Activated CD4-positive, alpha-beta T cell treated with anti-CD3 and anti-CD28 coated beads for 36 hours (primary cell): ENCODE measurements at regions of chr10 and their contacts with region 1.

Region 1: DNA sequence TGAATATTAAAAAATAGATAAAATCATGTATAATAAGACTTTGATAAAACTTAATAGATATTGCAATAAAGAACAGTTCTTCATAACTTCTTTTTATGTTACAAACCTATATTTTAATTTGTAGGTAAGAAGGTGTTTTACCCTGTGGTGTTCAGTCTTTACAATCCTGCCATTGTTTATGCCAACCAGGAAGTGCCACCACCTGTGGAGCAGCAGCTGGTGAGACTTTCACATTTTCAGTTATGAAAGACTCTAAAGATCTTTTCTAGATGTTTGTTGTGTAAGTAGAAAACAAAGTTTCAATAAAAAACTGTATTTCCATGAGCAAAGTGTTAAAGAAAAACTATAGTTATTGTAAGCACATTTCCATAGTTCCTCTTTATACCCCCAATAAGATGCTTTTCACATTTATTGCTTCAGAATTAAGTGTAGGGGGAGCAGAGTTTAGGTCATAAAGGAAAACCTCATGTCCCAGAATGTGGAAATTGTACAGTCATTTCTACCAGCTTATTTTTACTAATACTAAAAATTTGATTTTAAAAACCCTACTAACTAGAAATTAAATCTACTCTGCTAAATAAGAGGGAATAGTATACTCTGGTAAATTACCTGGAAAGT is 28.7 kb downstream of the CSGALNACT2 start:
- DNase-seq: no peak
- ATAC-seq: peak; percentile 16
- H3K4me3 Mint-ChIP-seq: no peak overlapping the region
- H3K27ac Mint-ChIP-seq: no peak overlapping the region
- H3K4me1 Mint-ChIP-seq: peaks cover 29% of the 10 kb centered on the region
- H3K27me3 Mint-ChIP-seq: no peaks in the 10 kb centered on the region

Region 2: DNA sequence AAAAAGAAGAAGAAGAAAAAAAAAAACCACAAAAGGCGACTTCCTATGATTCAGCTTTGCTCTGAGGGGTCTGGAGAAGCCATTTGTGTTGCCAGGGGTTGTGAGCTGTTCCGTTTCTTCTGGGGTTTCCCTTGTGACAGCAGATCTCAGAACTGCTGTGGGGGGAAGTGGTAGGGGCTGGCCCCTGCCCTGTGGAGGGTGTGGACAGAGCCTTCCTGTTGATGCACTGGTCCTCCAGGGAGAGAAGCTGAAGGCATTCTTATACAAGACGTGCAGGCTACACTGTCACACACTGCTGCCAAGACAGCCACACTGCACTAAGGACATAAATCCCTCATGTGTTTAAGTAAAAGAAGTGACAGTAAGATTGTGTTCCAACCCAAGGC is 46.1 kb before region 1 on chr10:
- CTCF ChIA-PET with region 1: interaction called, 5 read pairs
- POLR2A ChIA-PET with region 1: no interaction called
- intact Hi-C with region 1: loop called in 1 of 2 experiments (anchors 5 kb)
- DNase-seq: peak; percentile 84
- ATAC-seq: peak; percentile 99
- H3K4me3 Mint-ChIP-seq: peak overlapping the region; percentile 16
- H3K27ac Mint-ChIP-seq: peak overlapping the region; percentile 82
- H3K4me1 Mint-ChIP-seq: peaks cover 19% of the 10 kb centered on the region
- H3K27me3 Mint-ChIP-seq: no peaks in the 10 kb centered on the region

Region 3: DNA sequence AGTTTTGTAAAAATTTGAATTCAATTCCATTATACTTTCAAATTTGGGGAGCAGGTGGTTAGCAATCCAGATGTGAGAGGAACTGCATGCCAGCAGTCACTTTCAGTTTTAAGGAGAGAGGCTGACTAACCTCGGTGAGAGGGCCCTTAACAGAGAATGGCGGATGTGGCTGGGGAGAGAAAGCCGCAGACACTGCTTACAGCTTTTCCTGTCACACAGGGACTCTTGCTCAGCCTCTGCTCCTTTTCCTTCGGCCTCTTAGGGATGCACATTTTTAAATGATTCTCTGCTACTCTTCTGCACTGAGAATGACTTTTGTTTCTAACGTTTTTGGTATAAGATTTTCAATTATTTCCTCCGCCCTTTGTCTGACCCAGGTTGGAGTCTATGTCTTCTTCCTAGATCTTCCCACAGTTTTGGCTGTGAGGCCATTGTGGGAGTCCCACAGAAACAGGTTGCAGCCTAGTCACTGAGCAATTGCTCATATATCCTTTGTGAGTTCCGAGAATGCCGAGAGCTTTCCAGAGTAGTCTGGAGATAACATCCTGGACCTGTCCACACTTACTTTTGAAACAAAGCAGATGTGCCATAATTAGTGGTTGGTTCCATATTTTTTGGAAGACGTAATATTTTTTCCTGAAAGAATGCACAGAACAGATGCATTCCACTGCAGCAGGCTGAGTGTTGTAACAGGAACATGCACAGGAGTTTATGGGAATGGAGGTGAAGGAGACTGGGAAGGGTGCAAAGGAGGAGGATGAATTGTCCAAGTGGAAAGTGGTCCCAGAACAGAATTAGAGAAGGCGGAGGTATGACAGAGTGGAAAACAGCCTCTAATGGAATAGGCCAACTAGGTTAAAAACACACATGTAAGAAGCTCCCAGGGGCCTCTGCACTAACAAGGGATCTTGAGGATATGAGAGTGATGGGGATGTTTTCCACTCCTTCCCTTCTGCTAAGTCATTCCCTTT is 649.6 kb after region 1 on chr10:
- CTCF ChIA-PET with region 1: no interaction called
- POLR2A ChIA-PET with region 1: no interaction called
- intact Hi-C with region 1: no loop called
- DNase-seq: peak; percentile 90
- ATAC-seq: peak; percentile 95
- H3K4me3 Mint-ChIP-seq: peak overlapping the region; percentile 16
- H3K27ac Mint-ChIP-seq: peak overlapping the region; percentile 80
- H3K4me1 Mint-ChIP-seq: peaks cover 41% of the 10 kb centered on the region
- H3K27me3 Mint-ChIP-seq: no peaks in the 10 kb centered on the region